ENCODE measurements at regions of chrX and their contacts with region 1.

Region 1: GRCh38 chrX:15645258-15645657 is 19.3 kb downstream of the CLTRN start:
- DNase-seq: no peak
- ATAC-seq: no peak
- H3K4me3 ChIP-seq: no peak overlapping the region
- H3K27ac ChIP-seq: no peak overlapping the region
- H3K4me1 ChIP-seq: no peaks in the 10 kb centered on the region
- H3K27me3 ChIP-seq: peaks cover 0 to 73% (median 0%) of the 10 kb centered on the region in 9 donors
- CTCF ChIP-seq: peak in 1 of 12 donors; percentile 9
- POLR2A ChIP-seq: no peak

Region 2: GRCh38 chrX:15594371-15594770 is 50.9 kb before region 1 on chrX:
- intact Hi-C with region 1: loop called in 4 of 10 experiments (anchors 5 to 10 kb)
- DNase-seq: no peak
- ATAC-seq: peak in 2 of 4 donors; percentile 51 to 61
- H3K4me3 ChIP-seq: no peak overlapping the region
- H3K27ac ChIP-seq: peak overlapping the region in 2 of 12 donors; percentile 43 to 48
- H3K4me1 ChIP-seq: peaks cover 0 to 12% (median 0%) of the 10 kb centered on the region in 12 donors
- H3K27me3 ChIP-seq: peaks cover 0 to 60% (median 0%) of the 10 kb centered on the region in 9 donors
- CTCF ChIP-seq: peak in 8 of 12 donors; percentile 7 to 46 (median 20)
- POLR2A ChIP-seq: no peak